Caco-2 (cell line): ENCODE measurements at regions of chr20 and their contacts with region 1.

Region 1: DNA sequence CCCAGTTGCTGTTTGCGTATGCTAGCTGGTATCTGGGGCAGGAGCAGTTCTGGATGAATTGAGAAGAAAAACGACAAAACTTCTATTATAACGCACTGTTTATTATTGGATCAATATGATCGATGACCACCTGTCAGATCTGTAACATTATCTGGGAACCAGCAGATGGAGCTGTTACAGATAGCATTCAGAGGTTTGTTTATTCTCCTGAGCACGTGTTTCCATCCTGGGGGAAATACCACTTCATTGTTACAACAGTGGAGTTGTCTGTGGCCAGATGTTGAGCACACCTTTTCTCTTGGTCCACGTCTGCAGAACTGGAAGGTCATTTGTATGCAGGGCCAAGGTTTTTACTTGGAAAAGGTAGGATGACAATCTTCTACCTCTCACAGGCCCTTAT is 16.0 kb upstream of the NKX2-2 start:
- DNase-seq: peak in 1 of 2 experiments; percentile 24
- H3K4me3 ChIP-seq: no peak overlapping the region
- H3K4me3 Mint-ChIP-seq: no peak overlapping the region
- H3K27ac Mint-ChIP-seq: no peak overlapping the region
- H3K4me1 ChIP-seq: no peaks in the 10 kb centered on the region
- H3K4me1 Mint-ChIP-seq: no peaks in the 10 kb centered on the region
- H3K27me3 ChIP-seq: peaks cover 4% of the 10 kb centered on the region; the same call in 1 of the 2 replicates
- H3K27me3 Mint-ChIP-seq: peaks cover 16% of the 10 kb centered on the region
- CTCF ChIP-seq: peak; percentile 50 to 61

Region 2: DNA sequence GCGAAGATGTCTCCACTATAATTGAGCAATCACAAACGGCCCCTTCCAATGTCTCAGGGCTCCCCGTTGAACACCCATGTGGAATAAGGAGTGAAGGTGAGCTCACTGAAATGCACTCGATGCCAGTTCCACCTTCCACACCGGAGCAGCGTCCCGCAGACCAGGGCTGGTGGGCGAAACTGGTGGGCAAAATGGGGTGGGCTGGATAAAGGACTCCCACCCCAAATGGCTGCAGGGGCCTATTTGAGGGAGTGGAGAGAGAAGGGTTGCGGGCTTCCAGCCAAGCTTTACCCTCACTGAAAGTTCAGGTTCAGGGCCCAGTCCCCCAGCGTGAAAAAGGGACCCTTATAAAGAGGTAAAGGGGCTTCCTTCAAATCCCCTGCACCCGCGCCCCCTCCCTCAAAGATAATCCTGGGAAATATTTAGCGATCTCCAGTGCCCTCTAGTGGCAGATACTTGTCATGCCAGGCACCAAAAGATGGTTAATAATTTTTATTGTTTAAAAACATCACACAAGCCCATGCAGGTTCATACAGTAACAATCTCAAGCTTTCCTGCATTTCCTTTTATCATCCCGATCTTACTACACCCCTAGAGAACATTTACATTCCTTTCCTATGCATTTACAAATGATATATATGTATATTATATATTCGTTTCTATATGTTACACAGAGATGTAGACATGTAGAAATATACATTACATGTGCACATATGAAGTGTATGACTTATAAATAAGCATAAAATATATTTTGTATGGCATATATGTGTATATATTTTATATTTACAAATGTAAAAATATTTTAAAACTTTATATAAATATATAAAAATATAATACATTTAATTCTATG is 42.2 kb after region 1 on chr20:
- CTCF ChIA-PET with region 1: interaction called, 4 read pairs
- POLR2A ChIA-PET with region 1: no interaction called
- intact Hi-C with region 1: loop called (anchors 1 kb)
- DNase-seq: peak in 1 of 2 experiments; percentile 32
- H3K4me3 ChIP-seq: no peak overlapping the region
- H3K4me3 Mint-ChIP-seq: no peak overlapping the region
- H3K27ac Mint-ChIP-seq: no peak overlapping the region
- H3K4me1 ChIP-seq: no peaks in the 10 kb centered on the region
- H3K4me1 Mint-ChIP-seq: no peaks in the 10 kb centered on the region
- H3K27me3 ChIP-seq: no peaks in the 10 kb centered on the region; the same call in 1 of the 2 replicates
- H3K27me3 Mint-ChIP-seq: peaks cover 27% of the 10 kb centered on the region
- CTCF ChIP-seq: peak; percentile 85 to 88

Region 3: DNA sequence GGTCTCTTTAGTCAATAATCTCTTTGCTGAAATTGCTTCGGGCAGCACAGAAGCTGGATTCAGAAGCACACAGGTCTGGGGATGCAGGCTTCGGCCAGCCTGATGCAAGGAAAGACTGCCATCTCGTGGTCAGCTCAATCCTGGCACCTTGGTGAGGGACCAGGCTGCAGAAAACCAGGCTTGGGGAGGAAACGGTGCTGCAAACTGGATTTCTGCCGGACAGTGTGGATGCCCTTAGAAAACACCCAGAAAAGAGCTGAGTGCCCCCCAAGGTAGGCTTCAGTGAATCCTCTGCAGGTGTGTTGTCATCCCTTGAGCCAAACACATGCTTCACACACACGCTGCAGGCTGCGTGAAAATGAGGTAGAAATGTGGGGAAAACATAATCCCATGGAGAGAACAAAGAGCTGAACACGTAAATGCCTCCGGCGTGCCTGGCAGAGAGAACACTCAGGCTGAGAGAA is 85.8 kb after region 1 on chr20:
- CTCF ChIA-PET with region 1: interaction called, 16 read pairs
- POLR2A ChIA-PET with region 1: no interaction called
- intact Hi-C with region 1: loop called (anchors 2 kb)
- DNase-seq: peak; percentile 70 to 77
- H3K4me3 ChIP-seq: no peak overlapping the region
- H3K4me3 Mint-ChIP-seq: no peak overlapping the region
- H3K27ac Mint-ChIP-seq: no peak overlapping the region
- H3K4me1 ChIP-seq: peaks cover 4% of the 10 kb centered on the region; the same call in 1 of the 2 replicates
- H3K4me1 Mint-ChIP-seq: no peaks in the 10 kb centered on the region
- H3K27me3 ChIP-seq: no peaks in the 10 kb centered on the region; the same call in none of the 2 replicates
- H3K27me3 Mint-ChIP-seq: peaks cover 24% of the 10 kb centered on the region
- CTCF ChIP-seq: peak; percentile 87 to 93